HepG2 (cell line): ENCODE measurements at regions of chr3 and their contacts with region 1.

Region 1: GRCh38 chr3:50227390-50228183 is 8.4 kb upstream of the GNAI2 start:
- DNase-seq: peak; percentile 82
- ATAC-seq: peak; percentile 78
- H3K4me3 ChIP-seq: peak overlapping the region; percentile 75 to 88 (median 84)
- H3K27ac ChIP-seq: peak overlapping the region; percentile 70
- H3K4me1 ChIP-seq: peaks cover 73% of the 10 kb centered on the region
- H3K27me3 ChIP-seq: no peaks in the 10 kb centered on the region
- CTCF ChIP-seq: peak; percentile 89
- EP300 ChIP-seq: peak; percentile 20 to 47; a peak in 2 of 4 replicates
- POLR2A ChIP-seq: no peak
- RAD21 ChIP-seq: peak; percentile 99

Region 2: GRCh38 chr3:49939858-49940666 is 287.5 kb before region 1 on chr3 and contains the start of gene RBM6:
- CTCF ChIA-PET with region 1: no interaction called
- POLR2A ChIA-PET with region 1: no interaction called
- in situ Hi-C with region 1: no loop called
- intact Hi-C with region 1: no loop called
- DNase-seq: peak; percentile 97
- ATAC-seq: peak; percentile 97
- H3K4me3 ChIP-seq: peak within 1 kb of the TSS; percentile 84 to 94 (median 93)
- H3K27ac ChIP-seq: peak within 1 kb of the TSS; percentile 95
- H3K4me1 ChIP-seq: peaks cover 35% of the 10 kb centered on the region
- H3K27me3 ChIP-seq: peaks cover 0 to 2% of the 10 kb centered on the region in 2 experiments; a peak in 2 of 5 replicates
- CTCF ChIP-seq: peak; percentile 25; the same call in 1 of the 2 replicates
- EP300 ChIP-seq: peak in 1 of 2 experiments; percentile 5; a peak in 1 of 4 replicates
- POLR2A ChIP-seq: peak; percentile 90 to 93
- RAD21 ChIP-seq: peak; percentile 39; the same call in 1 of the 2 replicates
- total RNA-seq, gene RBM6: 51.6 and 86.1 TPM in 2 replicates

Region 3: DNA sequence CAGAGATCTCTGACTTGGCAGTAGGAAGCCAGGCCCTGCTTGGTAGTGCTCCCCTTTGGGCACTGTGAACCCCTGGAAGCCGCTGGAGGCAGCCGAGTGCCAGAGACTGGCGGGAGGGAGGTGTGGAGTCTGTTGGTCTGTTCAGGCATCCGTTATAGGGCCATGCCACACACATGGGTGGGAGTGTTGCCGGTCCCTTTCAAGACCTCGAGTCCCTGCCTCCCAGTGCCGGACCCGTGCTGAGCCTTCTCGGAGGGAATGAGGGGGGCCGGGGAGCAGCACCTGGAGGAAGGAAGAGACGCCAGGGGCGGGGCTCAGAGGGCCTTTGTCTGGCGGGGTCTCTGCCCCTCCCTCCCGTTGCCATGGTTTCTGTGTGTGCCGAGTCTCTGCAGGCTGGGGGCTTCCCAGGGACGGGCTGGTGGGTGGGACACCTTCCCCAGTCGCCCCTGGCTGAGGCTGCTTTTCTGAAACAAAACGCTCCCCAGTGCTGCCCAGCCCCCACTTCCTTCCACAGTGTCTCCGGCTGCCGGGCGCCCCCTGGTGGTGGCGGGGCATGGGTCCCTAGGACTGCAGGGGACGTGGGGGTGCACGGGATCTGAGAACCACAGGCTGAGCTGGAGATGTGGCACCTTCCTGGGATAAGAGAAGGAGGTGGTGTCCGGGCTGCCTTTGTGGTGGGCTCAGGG is 18.4 kb after region 1 on chr3:
- CTCF ChIA-PET with region 1: interaction called, 29 read pairs
- POLR2A ChIA-PET with region 1: interaction called, 3 read pairs
- in situ Hi-C with region 1: no loop called
- intact Hi-C with region 1: loop called (anchors 1 kb)
- DNase-seq: no peak
- ATAC-seq: peak; percentile 91
- H3K4me3 ChIP-seq: peak overlapping the region; percentile 18 to 67 (median 51); a peak in 5 of 6 replicates
- H3K27ac ChIP-seq: peak overlapping the region; percentile 43
- H3K4me1 ChIP-seq: peaks cover 20% of the 10 kb centered on the region
- H3K27me3 ChIP-seq: no peaks in the 10 kb centered on the region
- CTCF ChIP-seq: peak; percentile 98
- EP300 ChIP-seq: no peak
- POLR2A ChIP-seq: no peak
- RAD21 ChIP-seq: peak; percentile 91

Region 4: GRCh38 chr3:50267280-50267913 is 39.8 kb after region 1 on chr3:
- CTCF ChIA-PET with region 1: interaction called, 63 read pairs
- POLR2A ChIA-PET with region 1: interaction called, 11 read pairs
- in situ Hi-C with region 1: loop called (anchors 5 kb)
- intact Hi-C with region 1: loop called (anchors 5 kb)
- DNase-seq: no peak
- ATAC-seq: no peak
- H3K4me3 ChIP-seq: peak overlapping the region; percentile 9 to 83 (median 44); a peak in 5 of 6 replicates
- H3K27ac ChIP-seq: peak overlapping the region; percentile 88
- H3K4me1 ChIP-seq: peaks cover 88% of the 10 kb centered on the region
- H3K27me3 ChIP-seq: no peaks in the 10 kb centered on the region; a peak in 1 of 5 replicates
- CTCF ChIP-seq: no peak
- EP300 ChIP-seq: no peak
- POLR2A ChIP-seq: no peak
- RAD21 ChIP-seq: no peak

Region 5: GRCh38 chr3:50272911-50273693 is 45.5 kb after region 1 on chr3:
- CTCF ChIA-PET with region 1: interaction called, 63 read pairs
- POLR2A ChIA-PET with region 1: interaction called, 11 read pairs
- in situ Hi-C with region 1: loop called (anchors 5 kb)
- intact Hi-C with region 1: loop called (anchors 5 kb)
- DNase-seq: peak; percentile 64
- ATAC-seq: peak; percentile 13
- H3K4me3 ChIP-seq: no peak overlapping the region
- H3K27ac ChIP-seq: peak overlapping the region; percentile 88
- H3K4me1 ChIP-seq: peaks cover 54% of the 10 kb centered on the region
- H3K27me3 ChIP-seq: no peaks in the 10 kb centered on the region; a peak in 1 of 5 replicates
- CTCF ChIP-seq: peak; percentile 99
- EP300 ChIP-seq: 0 out of 4 replicates have a peak, but pooled peaks of 1 of the 2 experiments have one; percentile 26
- POLR2A ChIP-seq: no peak
- RAD21 ChIP-seq: peak; percentile 99